Activated CD8-positive, alpha-beta memory T cell treated with anti-CD3 and anti-CD28 coated beads, Interleukin-2, amount 10 ng/mL, durations not matched to agents 7 days and 5 days (primary cell): ENCODE measurements at regions of chr6 and their contacts with region 1.

Region 1: GRCh38 chr6:127933852-127934840 is 33.3 kb upstream of the THEMIS start:
- DNase-seq: peak; percentile 88
- ATAC-seq: peak; percentile 89
- H3K4me3 Mint-ChIP-seq: peak overlapping the region; percentile 71
- H3K27ac Mint-ChIP-seq: peak overlapping the region; percentile 98
- H3K4me1 Mint-ChIP-seq: peaks cover 58% of the 10 kb centered on the region
- H3K27me3 Mint-ChIP-seq: no peaks in the 10 kb centered on the region

Region 2: DNA sequence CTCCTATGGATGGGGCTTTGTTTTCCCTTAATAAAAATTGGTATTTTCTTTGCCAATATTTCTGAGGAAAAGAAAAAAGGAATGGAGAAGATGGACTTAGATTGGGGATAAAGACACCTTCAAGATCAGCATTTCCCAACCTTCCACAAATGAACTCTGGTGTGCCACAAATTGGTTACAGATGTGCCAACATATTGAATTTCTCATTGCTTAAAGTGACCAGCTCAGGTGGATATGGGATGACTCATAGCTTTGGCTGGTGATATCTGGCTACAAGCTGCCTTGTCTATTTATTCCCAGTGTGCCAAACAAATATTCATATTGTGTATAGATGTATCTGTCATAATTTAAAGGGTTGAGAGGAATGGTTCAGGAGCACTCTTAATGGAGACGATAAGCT is 65.8 kb before region 1 on chr6:
- CTCF ChIA-PET with region 1: no interaction called
- DNase-seq: no peak
- ATAC-seq: no peak
- H3K4me3 Mint-ChIP-seq: no peak overlapping the region
- H3K27ac Mint-ChIP-seq: no peak overlapping the region
- H3K4me1 Mint-ChIP-seq: peaks cover 62% of the 10 kb centered on the region
- H3K27me3 Mint-ChIP-seq: no peaks in the 10 kb centered on the region

Region 3: DNA sequence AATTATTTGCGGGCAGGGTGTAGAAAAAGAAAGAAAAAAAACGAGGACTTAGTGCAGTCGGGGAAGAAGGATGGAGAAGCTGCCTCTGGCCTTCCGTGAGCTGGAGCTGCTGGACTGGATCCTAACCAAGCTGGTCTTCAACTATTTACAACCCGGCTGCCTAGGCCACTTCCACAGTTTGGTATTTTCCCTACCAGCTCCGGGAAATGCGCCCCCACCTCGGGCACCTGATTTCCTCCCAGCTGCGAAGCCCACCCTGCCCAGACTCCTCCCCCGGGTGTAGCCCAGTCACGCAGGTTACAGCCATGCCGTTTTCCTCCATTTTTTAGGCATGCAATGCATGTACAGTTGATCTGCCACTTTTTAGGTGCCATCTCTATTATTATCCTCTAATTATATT is 54.5 kb before region 1 on chr6:
- CTCF ChIA-PET with region 1: no interaction called
- DNase-seq: peak; percentile 79
- ATAC-seq: peak; percentile 57
- H3K4me3 Mint-ChIP-seq: peak overlapping the region; percentile 69
- H3K27ac Mint-ChIP-seq: peak overlapping the region; percentile 85
- H3K4me1 Mint-ChIP-seq: peaks cover 76% of the 10 kb centered on the region
- H3K27me3 Mint-ChIP-seq: no peaks in the 10 kb centered on the region

Region 4: GRCh38 chr6:127907960-127908640 is 26.0 kb before region 1 on chr6:
- CTCF ChIA-PET with region 1: interaction called, 11 read pairs
- DNase-seq: peak; percentile 67
- ATAC-seq: peak; percentile 73
- H3K4me3 Mint-ChIP-seq: peak overlapping the region; percentile 85
- H3K27ac Mint-ChIP-seq: peak overlapping the region; percentile 96
- H3K4me1 Mint-ChIP-seq: peaks cover 63% of the 10 kb centered on the region
- H3K27me3 Mint-ChIP-seq: no peaks in the 10 kb centered on the region

Region 5: GRCh38 chr6:127918506-127919427 is 15.4 kb before region 1 on chr6:
- CTCF ChIA-PET with region 1: interaction called, 11 read pairs
- DNase-seq: no peak
- ATAC-seq: peak; percentile 65
- H3K4me3 Mint-ChIP-seq: peak overlapping the region; percentile 70
- H3K27ac Mint-ChIP-seq: peak overlapping the region; percentile 77
- H3K4me1 Mint-ChIP-seq: peaks cover 84% of the 10 kb centered on the region
- H3K27me3 Mint-ChIP-seq: no peaks in the 10 kb centered on the region

Region 6: DNA sequence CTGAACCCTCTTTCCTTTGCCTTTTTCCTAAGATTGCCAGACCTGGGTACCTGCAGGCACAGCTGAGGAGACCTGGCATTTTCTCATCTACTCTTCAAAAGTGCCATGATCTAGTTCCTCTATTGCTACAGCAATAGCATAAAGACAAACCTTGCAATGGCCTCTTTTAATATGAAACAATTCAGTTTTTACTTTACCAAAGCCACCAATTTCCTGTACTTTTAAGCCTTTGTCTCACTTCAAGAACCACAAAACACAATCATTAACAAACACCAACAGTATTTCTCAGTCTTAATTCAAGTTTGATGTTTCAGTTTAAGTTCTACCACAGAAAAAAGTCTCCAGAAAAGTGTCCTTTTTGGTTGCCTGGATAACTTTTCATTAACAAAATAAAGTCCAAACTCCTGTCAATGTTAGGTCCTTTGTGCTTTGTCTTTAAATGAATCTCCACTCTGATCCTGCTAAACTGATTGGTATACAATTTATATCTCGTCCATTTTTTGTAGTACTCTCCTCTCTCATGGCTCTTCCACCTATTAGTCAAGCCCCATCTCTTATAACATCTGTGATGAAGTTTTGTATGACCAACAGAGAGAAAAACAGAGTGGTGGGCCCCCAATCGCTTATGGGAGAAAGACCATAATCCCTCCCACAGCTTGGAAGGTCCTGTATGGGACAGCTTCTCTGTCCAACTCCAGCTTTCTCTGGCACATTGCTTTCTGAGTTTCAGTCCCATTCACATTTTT is 17.2 kb after region 1 on chr6:
- CTCF ChIA-PET with region 1: interaction called, 15 read pairs
- DNase-seq: no peak
- ATAC-seq: peak; percentile 55
- H3K4me3 Mint-ChIP-seq: peak overlapping the region; percentile 61
- H3K27ac Mint-ChIP-seq: peak overlapping the region; percentile 97
- H3K4me1 Mint-ChIP-seq: peaks cover 72% of the 10 kb centered on the region
- H3K27me3 Mint-ChIP-seq: no peaks in the 10 kb centered on the region

Region 7: GRCh38 chr6:128017288-128017687 is 83.1 kb after region 1 on chr6:
- CTCF ChIA-PET with region 1: no interaction called
- DNase-seq: no peak
- ATAC-seq: no peak
- H3K4me3 Mint-ChIP-seq: no peak overlapping the region
- H3K27ac Mint-ChIP-seq: no peak overlapping the region
- H3K4me1 Mint-ChIP-seq: peaks cover 2% of the 10 kb centered on the region
- H3K27me3 Mint-ChIP-seq: no peaks in the 10 kb centered on the region

Region 8: GRCh38 chr6:128295670-128296069 is 361.5 kb after region 1 on chr6:
- CTCF ChIA-PET with region 1: no interaction called
- DNase-seq: no peak
- ATAC-seq: no peak
- H3K4me3 Mint-ChIP-seq: no peak overlapping the region
- H3K27ac Mint-ChIP-seq: no peak overlapping the region
- H3K4me1 Mint-ChIP-seq: no peaks in the 10 kb centered on the region
- H3K27me3 Mint-ChIP-seq: peaks cover 4% of the 10 kb centered on the region